ENCODE measurements at regions of chr22 and their contacts with region 1.

Region 1: DNA sequence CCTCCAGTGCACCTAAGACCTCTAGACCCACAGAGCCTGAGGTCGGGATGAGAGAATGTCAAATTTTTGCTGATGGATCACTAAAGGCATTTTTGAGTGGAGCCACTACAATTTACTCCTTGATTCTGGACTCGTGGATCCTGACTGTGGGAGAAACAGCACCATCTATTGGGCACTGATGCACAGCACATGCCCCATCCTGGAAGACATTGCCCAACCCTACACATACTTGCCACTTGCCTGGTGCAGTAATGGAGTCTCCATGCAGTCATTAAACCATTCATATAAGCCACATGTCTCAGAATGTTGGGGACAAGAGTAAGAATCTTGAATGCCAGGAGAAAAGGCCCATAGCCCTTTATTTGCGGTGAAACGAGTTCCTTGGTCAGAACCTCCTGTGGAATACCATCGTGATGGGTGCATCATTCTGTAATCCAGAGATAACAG is 103.9 kb downstream of the GGTLC2 start:
- DNase-seq: peak; percentile 67
- ATAC-seq: peak; percentile 26
- H3K4me3 ChIP-seq: no peak overlapping the region
- H3K4me3 Mint-ChIP-seq: peak overlapping the region; percentile 26
- H3K27ac ChIP-seq: no peak overlapping the region
- H3K27ac Mint-ChIP-seq: peak overlapping the region; percentile 13
- H3K4me1 ChIP-seq: peaks cover 40 to 47% of the 10 kb centered on the region in 2 donors
- H3K4me1 Mint-ChIP-seq: peaks cover 51% of the 10 kb centered on the region
- H3K27me3 ChIP-seq: no peaks in the 10 kb centered on the region
- H3K27me3 Mint-ChIP-seq: no peaks in the 10 kb centered on the region
- CTCF ChIP-seq: no peak

Region 2: DNA sequence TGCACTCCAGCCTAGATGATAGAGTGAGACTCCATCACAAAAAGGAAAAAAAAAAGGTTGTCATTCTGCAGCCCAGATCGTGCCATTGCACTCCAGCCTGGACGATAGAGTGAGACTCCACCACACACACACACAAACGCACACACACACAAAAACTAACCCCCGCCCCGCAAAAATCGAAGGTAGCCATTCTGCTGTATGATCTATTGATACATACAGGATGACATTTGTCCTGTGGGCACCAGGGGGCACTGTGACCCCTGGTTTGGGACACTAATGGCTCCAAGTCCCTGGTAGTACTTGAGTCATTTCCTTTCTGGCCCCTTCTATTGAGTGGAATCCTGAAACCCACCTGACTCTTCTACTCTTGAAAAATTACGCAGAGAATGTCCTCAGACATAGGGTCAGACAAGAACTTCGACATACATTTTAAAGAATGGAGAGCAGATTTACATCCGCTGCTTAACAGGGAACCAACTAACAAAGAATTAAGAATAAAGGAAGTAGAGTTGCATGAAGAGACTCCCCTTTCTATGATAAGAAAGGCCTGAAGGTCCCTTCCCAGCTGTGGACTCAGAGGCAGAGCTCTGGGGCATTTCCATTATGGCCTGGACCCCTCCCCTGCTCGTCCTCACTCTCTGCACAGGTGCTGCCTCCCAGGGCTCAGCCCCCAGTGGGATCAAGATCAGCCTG is 154.2 kb before region 1 on chr22:
- CTCF ChIA-PET with region 1: interaction called, 5 read pairs
- POLR2A ChIA-PET with region 1: no interaction called
- intact Hi-C with region 1: loop called (anchors 5 kb)
- DNase-seq: peak; percentile 80
- ATAC-seq: peak; percentile 74
- H3K4me3 ChIP-seq: no peak overlapping the region
- H3K4me3 Mint-ChIP-seq: no peak overlapping the region
- H3K27ac ChIP-seq: no peak overlapping the region
- H3K27ac Mint-ChIP-seq: peak overlapping the region; percentile 82
- H3K4me1 ChIP-seq: peaks cover 10 to 11% of the 10 kb centered on the region in 2 donors
- H3K4me1 Mint-ChIP-seq: peaks cover 26% of the 10 kb centered on the region
- H3K27me3 ChIP-seq: no peaks in the 10 kb centered on the region
- H3K27me3 Mint-ChIP-seq: no peaks in the 10 kb centered on the region
- CTCF ChIP-seq: peak; percentile 81

Region 3: GRCh38 chr22:22692707-22693530 is 55.4 kb before region 1 on chr22:
- CTCF ChIA-PET with region 1: interaction called, 24 read pairs
- POLR2A ChIA-PET with region 1: no interaction called
- intact Hi-C with region 1: no loop called
- DNase-seq: peak; percentile 83
- ATAC-seq: peak; percentile 81
- H3K4me3 ChIP-seq: no peak overlapping the region
- H3K4me3 Mint-ChIP-seq: peak overlapping the region; percentile 71
- H3K27ac ChIP-seq: peak overlapping the region in 1 of 2 donors; percentile 26
- H3K27ac Mint-ChIP-seq: peak overlapping the region; percentile 85
- H3K4me1 ChIP-seq: peaks cover 28 to 44% of the 10 kb centered on the region in 2 donors
- H3K4me1 Mint-ChIP-seq: peaks cover 34% of the 10 kb centered on the region
- H3K27me3 ChIP-seq: no peaks in the 10 kb centered on the region
- H3K27me3 Mint-ChIP-seq: no peaks in the 10 kb centered on the region
- CTCF ChIP-seq: peak; percentile 87

Region 4: GRCh38 chr22:22710719-22711531 is 37.4 kb before region 1 on chr22:
- CTCF ChIA-PET with region 1: interaction called, 22 read pairs
- POLR2A ChIA-PET with region 1: no interaction called
- intact Hi-C with region 1: loop called (anchors 5 kb)
- DNase-seq: peak; percentile 80
- ATAC-seq: peak; percentile 48
- H3K4me3 ChIP-seq: no peak overlapping the region
- H3K4me3 Mint-ChIP-seq: peak overlapping the region; percentile 23
- H3K27ac ChIP-seq: no peak overlapping the region
- H3K27ac Mint-ChIP-seq: peak overlapping the region; percentile 76
- H3K4me1 ChIP-seq: peaks cover 30 to 53% of the 10 kb centered on the region in 2 donors
- H3K4me1 Mint-ChIP-seq: peaks cover 52% of the 10 kb centered on the region
- H3K27me3 ChIP-seq: peaks cover 0 to 2% (median 0%) of the 10 kb centered on the region in 4 experiments
- H3K27me3 Mint-ChIP-seq: peaks cover 3% of the 10 kb centered on the region
- CTCF ChIP-seq: peak; percentile 89

Region 5: DNA sequence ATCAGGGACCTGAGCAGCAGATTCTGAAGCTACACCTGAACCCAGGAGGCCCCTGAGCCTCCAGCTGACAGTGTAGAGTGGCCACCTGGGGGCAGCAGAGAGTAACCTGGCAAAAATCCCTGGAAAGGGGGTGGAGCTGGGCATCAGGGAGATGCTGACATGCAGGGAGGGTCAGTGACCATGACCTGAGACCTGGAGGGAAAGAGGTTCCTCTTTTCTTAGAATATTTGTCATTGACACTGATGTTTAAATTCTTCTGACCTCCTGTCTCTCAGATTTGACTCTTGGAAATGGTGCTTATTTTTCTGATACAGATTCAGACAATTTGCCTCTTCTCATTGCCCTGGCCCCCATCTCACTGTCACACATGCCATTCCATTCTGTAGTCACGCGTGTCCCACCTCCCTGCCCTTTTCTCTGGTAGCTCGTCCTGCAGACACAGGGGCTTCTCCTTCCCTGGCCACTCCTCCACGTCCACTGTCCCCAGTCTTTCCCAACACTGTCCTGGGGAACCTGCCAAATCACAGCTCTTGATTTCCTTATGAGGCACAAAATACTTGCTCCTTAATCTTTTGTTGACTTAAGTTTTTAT is 22.1 kb after region 1 on chr22:
- CTCF ChIA-PET with region 1: interaction called, 27 read pairs
- POLR2A ChIA-PET with region 1: no interaction called
- intact Hi-C with region 1: no loop called
- DNase-seq: peak; percentile 60
- ATAC-seq: no peak
- H3K4me3 ChIP-seq: no peak overlapping the region
- H3K4me3 Mint-ChIP-seq: no peak overlapping the region
- H3K27ac ChIP-seq: no peak overlapping the region
- H3K27ac Mint-ChIP-seq: peak overlapping the region; percentile 47
- H3K4me1 ChIP-seq: peaks cover 22 to 39% of the 10 kb centered on the region in 2 donors
- H3K4me1 Mint-ChIP-seq: peaks cover 32% of the 10 kb centered on the region
- H3K27me3 ChIP-seq: peaks cover 0 to 10% (median 3%) of the 10 kb centered on the region in 4 experiments
- H3K27me3 Mint-ChIP-seq: peaks cover 28% of the 10 kb centered on the region
- CTCF ChIP-seq: peak; percentile 67